ENCODE measurements at regions of chr20 and their contacts with region 1.

Region 1: DNA sequence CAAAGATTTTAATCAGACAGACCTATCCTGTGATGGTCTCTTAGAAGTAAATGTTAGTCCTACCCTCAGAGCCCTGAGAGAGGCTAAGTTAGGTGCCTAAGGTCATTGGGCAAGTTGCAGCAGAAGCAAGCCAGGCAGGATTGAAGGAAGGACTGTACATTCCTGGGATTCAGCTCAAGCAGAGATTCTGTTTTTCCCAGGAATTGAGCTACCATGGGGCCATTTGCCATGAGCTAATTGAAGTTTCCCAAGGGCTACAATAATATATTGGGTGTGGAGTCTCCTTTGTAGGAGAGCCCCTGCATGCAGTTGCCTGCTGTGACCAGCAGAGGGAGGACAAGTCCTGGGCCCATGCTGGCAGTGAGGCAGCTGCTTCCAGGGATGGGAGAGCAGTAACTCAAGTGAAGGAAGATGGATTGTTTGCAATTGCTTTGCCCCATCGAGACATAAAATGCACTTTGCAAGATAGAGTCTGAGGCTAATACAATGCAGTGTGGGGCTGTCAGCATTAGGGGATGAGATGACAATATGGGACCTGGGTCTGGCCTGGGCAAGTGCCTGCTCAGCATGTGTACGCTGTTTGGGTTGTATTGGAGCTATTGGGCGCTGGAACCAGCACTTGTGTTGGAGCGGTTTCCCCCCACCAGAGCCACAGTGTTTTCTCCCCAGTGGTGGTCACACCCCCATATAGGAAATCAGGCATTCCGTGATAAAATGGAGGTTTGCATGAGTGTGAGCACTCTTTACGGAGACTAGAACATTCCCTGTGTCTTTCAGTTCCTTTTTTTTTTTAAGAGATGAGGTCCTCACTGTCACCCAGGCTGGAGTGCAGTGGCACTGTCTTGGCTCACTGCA is 27.9 kb downstream of the DNMT3B start:
- DNase-seq: no peak
- H3K4me3 ChIP-seq: no peak overlapping the region
- H3K27me3 ChIP-seq: no peaks in the 10 kb centered on the region
- CTCF ChIP-seq: peak; percentile 100

Region 2: GRCh38 chr20:32674362-32674789 is 115.7 kb before region 1 on chr20:
- CTCF ChIA-PET with region 1: interaction called, 13 read pairs
- POLR2A ChIA-PET with region 1: no interaction called
- DNase-seq: no peak
- H3K4me3 ChIP-seq: no peak overlapping the region
- H3K27me3 ChIP-seq: no peaks in the 10 kb centered on the region
- CTCF ChIP-seq: peak; percentile 88

Region 3: GRCh38 chr20:32804022-32804715 is 14.0 kb after region 1 on chr20:
- CTCF ChIA-PET with region 1: interaction called, 30 read pairs
- POLR2A ChIA-PET with region 1: no interaction called
- DNase-seq: no peak
- H3K4me3 ChIP-seq: no peak overlapping the region
- H3K27me3 ChIP-seq: no peaks in the 10 kb centered on the region
- CTCF ChIP-seq: no peak

Region 4: DNA sequence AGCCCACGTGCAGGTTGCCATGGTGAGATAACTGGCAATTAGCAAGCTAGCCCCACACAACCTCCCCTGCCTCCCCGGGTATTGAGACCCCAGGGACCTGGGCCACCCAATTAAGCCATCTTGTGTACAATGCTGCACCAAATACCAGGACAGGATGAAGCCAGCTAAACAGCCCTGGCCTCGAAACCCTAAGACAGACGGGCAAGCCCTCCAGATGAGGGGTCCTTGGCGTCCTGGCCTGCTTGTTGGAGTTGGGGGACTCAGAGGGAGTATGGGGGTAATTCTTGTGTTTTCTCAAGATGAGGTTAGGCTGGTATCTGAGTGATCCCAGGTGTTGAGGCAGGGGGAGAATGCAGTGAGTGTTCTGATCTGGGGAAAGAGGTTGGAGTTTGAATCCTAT is 20.8 kb after region 1 on chr20:
- CTCF ChIA-PET with region 1: interaction called, 13 read pairs
- POLR2A ChIA-PET with region 1: no interaction called
- DNase-seq: no peak
- H3K4me3 ChIP-seq: no peak overlapping the region
- H3K27me3 ChIP-seq: no peaks in the 10 kb centered on the region
- CTCF ChIP-seq: no peak

Region 5: GRCh38 chr20:32896521-32897280 is 106.6 kb after region 1 on chr20:
- CTCF ChIA-PET with region 1: interaction called, 12 read pairs
- POLR2A ChIA-PET with region 1: no interaction called
- DNase-seq: no peak
- H3K4me3 ChIP-seq: no peak overlapping the region
- H3K27me3 ChIP-seq: no peaks in the 10 kb centered on the region
- CTCF ChIP-seq: no peak

Region 6: GRCh38 chr20:32902456-32903420 is 112.6 kb after region 1 on chr20:
- CTCF ChIA-PET with region 1: interaction called, 11 read pairs
- POLR2A ChIA-PET with region 1: no interaction called
- DNase-seq: no peak
- H3K4me3 ChIP-seq: no peak overlapping the region
- H3K27me3 ChIP-seq: no peaks in the 10 kb centered on the region
- CTCF ChIP-seq: peak; percentile 92

Region 7: GRCh38 chr20:32945710-32946221 is 155.6 kb after region 1 on chr20:
- CTCF ChIA-PET with region 1: interaction called, 63 read pairs
- POLR2A ChIA-PET with region 1: no interaction called
- DNase-seq: no peak
- H3K4me3 ChIP-seq: no peak overlapping the region
- H3K27me3 ChIP-seq: peaks cover 5% of the 10 kb centered on the region
- CTCF ChIP-seq: peak; percentile 71

Measured in BJ (cell line).